ENCODE measurements at regions of chr10 and their contacts with region 1.

Region 1: DNA sequence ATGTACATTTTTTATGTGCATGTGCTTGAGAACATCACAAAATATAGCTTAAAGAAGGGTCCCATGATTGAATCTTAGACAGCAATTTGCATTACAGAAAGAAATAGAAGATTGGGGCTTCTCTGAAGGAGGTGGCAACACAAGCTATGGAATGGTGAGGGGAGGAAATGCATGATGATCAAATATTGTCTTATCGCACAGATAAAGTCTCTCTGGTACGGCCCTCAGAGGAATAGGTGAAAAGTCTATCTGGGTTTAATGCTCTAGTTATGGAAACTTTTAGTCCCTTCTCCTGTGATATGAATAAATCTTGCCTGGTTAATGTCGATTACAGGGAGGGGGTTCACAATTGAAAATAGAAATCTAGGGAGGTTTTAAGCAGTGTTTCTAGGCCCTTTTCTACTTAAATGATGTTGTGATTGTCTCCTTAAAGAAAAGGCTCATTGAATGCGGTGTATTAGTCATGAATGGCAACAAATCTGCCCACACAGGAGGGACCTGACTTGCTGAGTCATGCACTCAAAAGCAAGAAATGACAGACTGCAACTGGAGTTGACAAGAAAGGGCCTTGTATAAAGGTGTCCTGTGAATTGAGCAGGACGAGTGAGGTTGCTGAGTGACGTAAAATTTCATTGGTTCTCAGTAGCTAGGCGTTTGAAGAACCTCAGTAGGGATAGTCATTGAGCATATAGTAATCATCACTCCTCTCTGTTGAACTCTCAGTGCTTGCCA is 133.4 kb upstream of the CSTF2T start:
- DNase-seq: peak; percentile 55
- H3K4me3 Mint-ChIP-seq: no peak overlapping the region
- H3K27ac Mint-ChIP-seq: no peak overlapping the region
- H3K4me1 Mint-ChIP-seq: peaks cover 4% of the 10 kb centered on the region
- H3K27me3 Mint-ChIP-seq: no peaks in the 10 kb centered on the region

Region 2: DNA sequence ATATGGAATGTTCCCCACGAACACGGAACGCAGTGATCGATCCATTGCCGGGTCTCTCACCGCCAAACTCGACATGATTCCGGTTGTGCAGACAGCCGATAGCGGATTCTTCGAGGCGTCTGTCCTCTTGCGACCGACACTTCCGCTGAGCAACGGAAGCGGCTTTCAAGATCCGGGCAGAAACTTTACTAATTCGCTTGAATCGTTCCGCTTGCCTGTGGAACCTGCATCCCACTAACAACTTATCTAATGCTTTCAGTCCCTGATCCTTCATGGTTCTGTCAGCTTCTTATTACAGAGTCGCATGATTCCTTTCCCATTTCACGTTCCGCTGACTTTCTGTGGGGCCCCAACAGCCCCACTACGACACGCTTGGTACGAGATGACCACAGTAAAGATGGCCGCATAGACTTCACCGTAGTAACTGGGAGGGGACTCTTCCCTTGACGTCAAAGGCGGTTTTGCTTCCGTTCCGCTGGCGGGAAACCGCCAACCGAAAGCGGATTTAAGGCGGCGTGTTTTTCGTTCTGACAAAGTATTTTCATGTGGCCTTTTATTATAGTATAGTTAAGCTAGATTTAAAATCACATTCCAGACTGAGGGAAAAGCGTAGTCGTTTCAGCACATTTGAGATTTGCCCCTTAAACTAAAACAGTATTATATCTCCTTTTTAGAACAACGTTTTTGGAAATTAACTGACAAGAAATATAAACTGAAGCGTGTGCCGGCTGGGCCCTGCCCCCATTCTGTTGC is 133.2 kb before region 1 on chr10 and contains the start of gene CSTF2T:
- CTCF ChIA-PET with region 1: no interaction called
- POLR2A ChIA-PET with region 1: no interaction called
- intact Hi-C with region 1: loop called (anchors 1 kb)
- DNase-seq: peak; percentile 94
- H3K4me3 Mint-ChIP-seq: peak within 1 kb of the TSS; percentile 95
- H3K27ac Mint-ChIP-seq: peak within 1 kb of the TSS; percentile 100
- H3K4me1 Mint-ChIP-seq: peaks cover 48% of the 10 kb centered on the region
- H3K27me3 Mint-ChIP-seq: no peaks in the 10 kb centered on the region
- total RNA-seq, gene CSTF2T: 26.4 TPM

Region 3: DNA sequence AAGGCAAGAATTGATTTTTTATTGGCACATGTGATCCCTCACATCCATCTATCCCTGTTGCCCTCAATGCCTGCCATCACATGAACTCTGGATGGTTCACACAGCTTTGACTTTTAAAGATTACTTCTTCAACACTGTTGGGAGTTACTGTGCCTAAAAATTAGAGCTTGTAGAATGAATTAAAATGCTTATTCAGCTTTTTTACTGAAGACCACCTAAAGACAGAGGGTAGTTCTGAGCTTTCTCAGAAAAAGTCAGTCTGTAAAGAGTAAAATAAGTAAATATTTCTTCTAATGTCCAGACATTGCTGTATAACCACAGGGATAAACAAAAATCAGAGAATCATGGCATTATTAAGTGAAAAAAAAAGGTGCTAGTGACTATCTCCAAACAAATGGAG is 40.1 kb before region 1 on chr10:
- CTCF ChIA-PET with region 1: no interaction called
- POLR2A ChIA-PET with region 1: no interaction called
- intact Hi-C with region 1: no loop called
- DNase-seq: no peak
- H3K4me3 Mint-ChIP-seq: no peak overlapping the region
- H3K27ac Mint-ChIP-seq: no peak overlapping the region
- H3K4me1 Mint-ChIP-seq: no peaks in the 10 kb centered on the region
- H3K27me3 Mint-ChIP-seq: no peaks in the 10 kb centered on the region

Region 4: DNA sequence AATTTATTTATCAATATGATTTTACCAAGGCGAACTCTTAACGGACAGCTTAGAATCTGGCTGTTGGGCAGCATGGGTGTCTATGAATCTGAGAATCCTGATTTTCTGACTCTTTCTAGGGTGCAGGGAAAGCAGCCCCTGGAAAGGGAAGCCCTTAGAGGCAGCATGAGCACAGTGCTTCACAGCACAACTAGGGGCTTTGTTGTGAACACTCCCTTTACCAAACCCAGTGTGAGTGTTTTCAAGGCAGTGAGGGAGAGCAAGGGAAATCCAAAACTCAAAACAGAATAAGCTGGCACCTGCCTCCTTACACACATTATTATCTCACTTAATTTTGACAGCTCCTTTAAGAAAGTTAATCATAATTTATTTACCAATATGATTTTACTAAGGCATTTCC is 17.1 kb before region 1 on chr10:
- CTCF ChIA-PET with region 1: no interaction called
- POLR2A ChIA-PET with region 1: no interaction called
- intact Hi-C with region 1: no loop called
- DNase-seq: no peak
- H3K4me3 Mint-ChIP-seq: no peak overlapping the region
- H3K27ac Mint-ChIP-seq: no peak overlapping the region
- H3K4me1 Mint-ChIP-seq: no peaks in the 10 kb centered on the region
- H3K27me3 Mint-ChIP-seq: no peaks in the 10 kb centered on the region

Region 5: DNA sequence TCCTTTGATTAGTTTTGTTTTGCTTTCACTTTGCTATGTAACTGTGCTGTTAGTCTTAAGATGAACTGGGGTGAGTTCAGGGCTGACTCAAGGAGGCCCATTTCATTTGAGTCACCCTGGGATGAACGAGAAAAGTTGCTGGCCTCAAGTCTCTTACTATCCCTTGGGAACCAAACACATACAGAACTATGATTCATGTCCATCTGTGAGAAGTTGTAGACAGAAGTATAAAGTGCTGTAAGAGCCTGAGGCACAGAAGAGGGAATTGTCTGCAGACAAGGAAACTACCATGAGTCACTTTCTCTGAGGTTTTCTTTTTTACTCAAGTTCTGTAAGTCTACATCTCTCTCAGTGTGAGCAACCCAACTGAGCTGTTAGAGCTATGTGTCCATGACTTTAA is 46.4 kb after region 1 on chr10:
- CTCF ChIA-PET with region 1: no interaction called
- POLR2A ChIA-PET with region 1: no interaction called
- intact Hi-C with region 1: loop called (anchors 1 kb)
- DNase-seq: peak; percentile 54
- H3K4me3 Mint-ChIP-seq: no peak overlapping the region
- H3K27ac Mint-ChIP-seq: no peak overlapping the region
- H3K4me1 Mint-ChIP-seq: peaks cover 16% of the 10 kb centered on the region
- H3K27me3 Mint-ChIP-seq: no peaks in the 10 kb centered on the region

Measured in activated CD4-positive, alpha-beta memory T cell treated with anti-CD3 and anti-CD28 coated beads for 36 hours (primary cell).